AG04449 (cell line): ENCODE measurements at regions of chr19 and their contacts with region 1.

Region 1: GRCh38 chr19:39435499-39436349 is at the start of gene RPS16:
- DNase-seq: no peak
- H3K4me3 ChIP-seq: peak within 1 kb of the TSS; percentile 100
- CTCF ChIP-seq: no peak

Region 2: DNA sequence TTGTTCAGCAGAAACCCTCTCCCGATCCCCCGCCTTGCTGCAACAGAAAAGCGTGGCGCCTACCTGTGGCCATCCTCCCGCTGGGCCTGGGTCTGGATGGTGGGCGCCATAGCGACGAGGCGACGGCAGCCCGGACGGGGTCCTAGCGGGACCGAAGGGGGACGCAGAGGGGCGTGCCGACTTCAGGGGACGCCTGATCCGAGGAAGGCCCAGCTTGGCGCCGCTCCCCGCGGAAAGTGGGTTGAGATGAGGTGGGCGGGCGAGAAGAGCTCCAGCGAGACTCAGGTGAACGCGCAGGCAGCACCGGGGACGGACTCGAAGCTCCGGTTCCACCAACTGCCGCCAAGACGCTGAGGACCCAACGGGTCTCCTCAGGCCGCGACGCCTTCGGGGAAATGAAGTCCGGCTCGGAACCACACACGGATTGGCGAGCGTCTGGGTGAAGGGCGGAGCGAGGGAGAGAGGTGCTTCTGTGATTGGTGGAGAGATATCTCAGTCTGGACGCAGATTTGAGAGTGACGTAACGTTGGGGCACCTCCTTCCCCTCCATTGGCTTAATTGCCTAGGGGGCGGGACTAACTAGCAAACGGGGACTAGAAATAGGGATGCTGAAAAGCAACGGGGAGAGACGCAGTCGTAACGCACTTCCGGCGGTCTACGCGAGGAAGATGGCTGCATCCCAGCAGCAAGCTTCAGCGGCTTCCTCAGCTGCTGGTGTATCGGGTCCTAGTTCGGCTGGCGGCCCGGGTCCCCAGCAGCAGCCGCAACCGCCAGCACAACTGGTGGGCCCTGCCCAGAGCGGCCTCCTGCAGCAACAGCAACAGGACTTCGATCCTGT is 44.8 kb before region 1 on chr19 and contains the starts of genes MED29 and PAF1:
- CTCF ChIA-PET with region 1: no interaction called
- POLR2A ChIA-PET with region 1: interaction called, 15 read pairs
- DNase-seq: peak; percentile 97
- H3K4me3 ChIP-seq: peak within 1 kb of the TSS; percentile 99
- CTCF ChIP-seq: no peak

Region 3: DNA sequence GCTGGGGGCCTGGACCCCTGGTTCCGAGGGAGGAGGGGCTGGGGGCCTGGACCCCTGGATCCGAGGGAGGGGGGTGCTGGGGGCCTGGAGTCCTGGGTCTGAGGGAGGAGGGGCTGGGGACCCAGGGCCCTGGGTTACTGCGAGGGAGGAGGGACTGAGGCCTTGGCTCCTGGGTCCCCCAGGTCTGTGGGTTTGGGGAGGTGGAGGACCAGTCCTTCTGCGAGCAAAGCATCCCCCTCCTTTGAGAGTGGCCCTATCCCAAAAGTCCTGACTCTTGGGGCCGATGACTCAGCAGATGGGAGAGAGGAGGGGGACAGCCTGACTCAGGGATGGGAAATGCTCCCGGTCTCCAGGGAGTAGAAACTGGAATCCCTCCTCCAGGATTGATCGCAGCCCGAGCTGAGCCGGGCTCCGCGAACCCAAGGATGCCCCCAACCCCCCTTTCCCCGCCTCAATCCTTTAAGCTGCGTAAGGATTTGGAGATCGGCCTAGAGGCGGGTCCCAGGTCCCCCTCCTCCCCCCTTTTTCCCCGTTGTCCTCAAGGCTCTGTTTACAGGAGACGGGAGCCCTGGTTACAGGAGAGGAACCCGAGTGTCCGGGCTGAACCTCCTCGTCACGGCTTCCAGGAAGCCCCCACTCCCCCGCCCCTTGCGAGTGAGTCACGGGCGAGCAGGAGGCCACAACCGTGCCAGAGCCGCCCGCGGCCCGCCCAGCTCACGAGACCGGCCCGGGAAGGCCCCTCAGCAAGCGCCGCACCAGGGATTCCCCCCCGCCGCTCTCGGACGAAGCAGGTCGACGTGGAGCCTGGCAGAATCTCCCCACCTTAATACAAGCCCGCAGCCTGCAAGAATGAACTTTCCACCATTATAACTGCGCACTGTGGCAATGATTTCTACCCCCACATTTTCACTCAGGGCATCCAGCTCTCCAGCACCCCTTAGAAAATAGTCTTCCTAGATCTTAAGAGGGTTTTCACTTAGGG is 32.1 kb before region 1 on chr19:
- CTCF ChIA-PET with region 1: interaction called, 11 read pairs
- POLR2A ChIA-PET with region 1: interaction called, 26 read pairs
- DNase-seq: peak; percentile 98
- H3K4me3 ChIP-seq: peak overlapping the region; percentile 55
- CTCF ChIP-seq: no peak

Region 4: DNA sequence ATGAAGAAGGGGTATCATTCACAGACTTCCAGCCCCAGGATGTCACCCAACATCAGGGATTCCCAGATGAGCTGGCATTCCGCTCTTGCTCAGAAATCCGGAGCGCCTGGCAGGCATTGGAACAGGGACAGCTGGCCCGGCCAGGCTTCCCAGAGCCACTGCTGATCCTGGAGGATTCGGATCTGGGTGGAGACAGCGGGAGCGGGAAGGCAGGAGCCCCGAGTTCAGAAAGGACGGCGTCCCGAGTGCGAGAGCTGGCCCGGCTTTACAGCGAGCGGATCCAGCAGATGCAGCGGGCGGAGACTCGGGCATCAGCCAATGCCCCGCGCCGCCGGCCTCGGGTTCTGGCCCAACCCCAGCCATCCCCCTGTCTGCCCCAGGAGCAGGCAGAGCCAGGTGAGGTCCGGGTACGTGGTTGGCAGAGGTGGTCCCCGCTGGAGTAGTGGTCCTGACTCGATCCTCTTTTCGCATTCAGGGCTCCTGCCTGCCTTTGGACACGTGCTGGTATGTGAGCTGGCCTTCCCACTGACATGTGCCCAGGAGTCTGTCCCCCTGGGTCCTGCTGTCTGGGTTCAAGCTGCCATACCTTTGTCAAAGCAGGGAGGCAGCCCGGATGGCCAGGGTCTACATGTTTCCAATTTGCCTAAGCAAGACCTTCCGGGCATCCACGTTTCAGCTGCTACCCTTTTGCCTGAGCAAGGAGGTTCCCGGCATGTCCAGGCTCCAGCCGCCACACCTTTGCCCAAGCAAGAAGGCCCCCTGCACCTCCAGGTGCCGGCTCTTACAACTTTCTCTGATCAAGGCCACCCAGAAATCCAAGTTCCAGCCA is 12.3 kb before region 1 on chr19:
- CTCF ChIA-PET with region 1: interaction called, 7 read pairs
- POLR2A ChIA-PET with region 1: interaction called, 19 read pairs
- DNase-seq: no peak
- H3K4me3 ChIP-seq: no peak overlapping the region
- CTCF ChIP-seq: no peak

Region 5: DNA sequence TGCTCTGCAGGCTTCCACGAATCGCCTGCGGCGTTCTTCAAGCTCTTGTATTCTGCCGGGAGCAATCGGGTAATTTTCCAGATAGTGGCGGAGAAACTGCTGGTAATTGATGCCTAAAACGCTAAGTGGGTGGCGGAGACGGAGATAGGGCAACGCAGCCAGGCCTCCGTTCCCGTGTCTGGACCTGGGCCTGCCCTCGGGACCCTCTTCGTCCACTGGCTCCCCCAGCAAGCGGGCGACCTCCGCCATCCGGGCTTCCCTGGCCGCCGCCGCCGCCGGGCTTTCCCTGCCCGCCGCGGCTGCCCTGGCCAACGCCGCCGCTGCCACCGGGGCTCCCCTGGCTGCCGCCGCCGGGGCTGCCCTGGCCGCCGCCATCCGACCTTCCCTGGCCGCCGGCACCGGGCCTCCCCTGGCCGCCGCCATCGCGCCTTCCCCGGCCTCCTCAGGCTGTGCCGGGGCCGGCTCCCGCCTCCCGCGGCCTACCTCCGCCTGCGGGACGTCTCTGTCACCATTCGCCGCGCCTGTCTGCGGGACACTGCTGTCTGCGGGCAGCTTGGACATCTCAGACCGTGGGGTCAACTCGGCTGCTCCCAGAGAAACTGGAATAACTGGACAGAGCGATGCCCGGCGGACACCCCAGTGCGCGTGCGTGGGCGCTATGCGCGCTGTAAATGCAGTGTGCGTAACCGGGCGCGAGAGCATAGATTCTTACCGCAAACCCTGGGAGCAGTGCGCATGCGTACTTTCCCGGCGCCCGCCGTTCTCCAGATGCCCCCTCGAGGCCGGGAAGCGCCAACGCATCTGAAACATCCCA is 104.0 kb after region 1 on chr19 and contains the start of gene EID2:
- CTCF ChIA-PET with region 1: interaction called, 129 read pairs
- POLR2A ChIA-PET with region 1: interaction called, 4 read pairs
- DNase-seq: peak; percentile 49
- H3K4me3 ChIP-seq: peak within 1 kb of the TSS; percentile 97
- CTCF ChIP-seq: peak; percentile 88

Region 6: DNA sequence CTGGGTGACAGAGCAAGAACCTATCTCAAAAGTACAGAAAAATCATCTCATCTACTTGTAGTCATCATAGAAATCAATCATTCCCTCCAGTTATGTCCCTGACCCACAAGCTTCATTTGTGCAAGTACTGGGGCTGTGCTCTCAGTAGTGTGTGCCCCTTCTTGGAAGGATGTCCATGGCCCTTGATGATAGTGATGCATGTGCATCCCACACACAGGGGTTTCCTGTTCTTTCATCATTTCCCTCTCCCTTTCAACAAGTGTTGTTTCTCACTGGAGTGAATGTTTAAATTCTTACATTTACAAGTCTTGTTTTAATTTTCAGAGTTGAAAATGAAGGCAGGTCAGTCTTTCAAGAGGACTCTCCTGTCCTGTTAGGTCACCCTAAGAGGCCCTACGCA is 168.1 kb after region 1 on chr19:
- CTCF ChIA-PET with region 1: no interaction called
- POLR2A ChIA-PET with region 1: no interaction called
- DNase-seq: no peak
- H3K4me3 ChIP-seq: no peak overlapping the region
- CTCF ChIP-seq: no peak

Region 7: DNA sequence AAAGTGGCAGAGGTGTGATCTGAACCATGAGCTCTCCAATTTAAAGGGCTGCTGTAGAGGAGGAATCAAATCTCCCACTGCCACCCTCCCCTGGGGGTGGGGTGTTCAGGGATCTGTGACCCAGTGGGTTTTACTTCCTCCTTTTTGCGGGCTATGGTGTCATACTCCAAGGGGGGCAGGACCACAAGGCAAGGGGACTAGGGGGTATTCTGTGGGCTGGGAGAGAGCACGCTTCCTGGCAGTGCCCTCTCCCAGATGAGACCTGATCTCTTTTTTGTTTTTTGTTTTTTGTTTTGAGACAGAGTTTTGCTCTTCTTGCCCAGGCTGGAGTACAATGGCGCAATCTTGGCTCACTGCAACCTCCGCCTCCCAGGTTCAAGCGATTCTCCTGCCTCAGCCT is 923.0 kb after region 1 on chr19:
- CTCF ChIA-PET with region 1: no interaction called
- POLR2A ChIA-PET with region 1: no interaction called
- DNase-seq: no peak
- H3K4me3 ChIP-seq: no peak overlapping the region
- CTCF ChIP-seq: no peak